WTC11 (cell line): ENCODE measurements at regions of chr11 and their contacts with region 1.

Region 1: DNA sequence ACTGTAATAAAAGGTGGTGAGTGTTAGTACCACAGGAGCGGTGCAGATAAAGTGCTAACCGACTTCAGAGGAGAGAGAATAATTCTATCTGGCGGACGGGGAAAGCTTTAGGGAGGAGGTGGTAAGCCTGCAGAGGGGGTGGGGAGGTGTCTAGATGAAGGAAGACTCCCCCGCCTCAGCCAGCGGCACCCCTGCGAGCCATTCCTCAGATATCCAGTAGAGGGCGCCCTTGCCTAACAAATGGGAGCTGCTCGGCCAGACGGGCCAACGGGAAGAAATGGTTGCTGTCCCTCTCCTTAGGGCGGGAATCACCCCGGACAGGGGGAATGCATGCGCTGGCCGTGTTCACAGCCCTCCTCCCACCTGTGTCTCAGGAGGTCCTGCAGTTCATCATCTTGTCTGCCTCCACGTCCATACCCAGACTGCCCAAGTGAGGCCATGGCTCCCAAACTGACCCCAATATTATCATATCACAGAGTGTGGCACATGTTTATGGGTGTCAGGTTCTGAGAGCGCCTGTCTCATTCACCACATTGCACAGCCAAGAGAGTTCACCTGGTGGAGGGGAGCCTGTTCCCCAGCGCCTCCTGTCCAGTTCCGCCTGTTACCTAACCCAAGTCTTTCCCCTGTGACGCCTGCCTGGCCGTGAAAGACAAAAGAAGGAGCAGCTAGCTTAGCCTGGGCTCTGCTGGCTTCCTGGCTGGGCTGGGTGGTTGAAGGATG is 85.5 kb downstream of the ST3GAL4 start:
- DNase-seq: peak; percentile 95
- ATAC-seq: peak; percentile 85
- H3K4me3 Mint-ChIP-seq: peak overlapping the region; percentile 42
- H3K27ac Mint-ChIP-seq: no peak overlapping the region
- H3K4me1 Mint-ChIP-seq: peaks cover 31% of the 10 kb centered on the region
- H3K27me3 Mint-ChIP-seq: no peaks in the 10 kb centered on the region; the same call in 1 of the 2 replicates
- CTCF ChIP-seq: peak; percentile 95

Region 2: DNA sequence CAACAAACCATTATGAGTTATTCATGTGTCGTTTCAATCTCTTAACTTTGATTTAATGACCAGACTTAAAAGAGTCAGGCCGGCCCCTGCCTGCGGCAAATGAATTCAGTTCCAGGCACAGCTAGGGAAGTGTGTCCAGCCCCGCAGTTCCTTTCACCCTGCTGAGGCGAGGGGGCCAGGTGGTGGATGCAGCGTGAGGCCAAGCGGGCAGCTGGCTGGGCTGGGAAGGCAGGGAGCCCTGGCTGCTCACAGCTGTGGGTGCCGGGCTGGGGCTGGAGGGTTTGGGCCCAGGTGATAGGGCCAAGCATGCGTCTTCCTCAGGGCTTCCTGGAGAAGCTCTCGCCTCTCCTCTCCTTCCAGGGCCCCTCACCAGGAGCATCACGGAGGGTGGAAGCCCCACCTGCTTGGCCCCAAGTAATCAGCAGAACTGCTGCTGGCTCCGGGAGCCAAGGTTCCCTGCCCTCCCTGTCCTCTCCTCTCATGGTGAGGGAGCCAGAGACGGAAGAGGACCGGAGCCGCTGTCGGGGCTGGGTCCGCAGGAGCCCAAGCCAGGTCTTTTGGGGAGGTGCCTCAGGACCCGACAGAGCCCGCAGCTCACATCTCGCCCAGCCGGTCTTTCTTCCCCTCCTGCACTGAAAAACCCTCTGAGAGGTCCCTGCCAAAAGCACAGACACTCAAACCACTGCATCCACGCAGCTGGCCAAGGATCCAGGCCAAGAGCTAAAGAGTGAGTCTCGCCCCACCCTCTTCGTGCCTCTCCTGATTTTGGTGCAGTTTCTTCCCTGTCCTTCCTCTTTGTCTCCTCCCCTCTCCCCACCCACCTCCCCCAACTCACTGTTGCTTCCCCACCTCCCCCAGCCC is 11.5 kb after region 1 on chr11:
- CTCF ChIA-PET with region 1: interaction called, 13 read pairs
- POLR2A ChIA-PET with region 1: no interaction called
- DNase-seq: peak; percentile 20
- ATAC-seq: peak; percentile 50
- H3K4me3 Mint-ChIP-seq: no peak overlapping the region
- H3K27ac Mint-ChIP-seq: no peak overlapping the region
- H3K4me1 Mint-ChIP-seq: no peaks in the 10 kb centered on the region
- H3K27me3 Mint-ChIP-seq: no peaks in the 10 kb centered on the region; the same call in none of the 2 replicates
- CTCF ChIP-seq: no peak

Region 3: GRCh38 chr11:126834149-126834548 is 393.2 kb after region 1 on chr11:
- CTCF ChIA-PET with region 1: no interaction called
- POLR2A ChIA-PET with region 1: no interaction called
- DNase-seq: no peak
- ATAC-seq: no peak
- H3K4me3 Mint-ChIP-seq: no peak overlapping the region
- H3K27ac Mint-ChIP-seq: no peak overlapping the region
- H3K4me1 Mint-ChIP-seq: 0 out of 2 replicates have a peak, but pooled peaks cover 8% of the 10 kb centered on the region
- H3K27me3 Mint-ChIP-seq: no peaks in the 10 kb centered on the region
- CTCF ChIP-seq: no peak